MCF 10A (cell line): ENCODE measurements at regions of chr14 and their contacts with region 1.

Region 1: DNA sequence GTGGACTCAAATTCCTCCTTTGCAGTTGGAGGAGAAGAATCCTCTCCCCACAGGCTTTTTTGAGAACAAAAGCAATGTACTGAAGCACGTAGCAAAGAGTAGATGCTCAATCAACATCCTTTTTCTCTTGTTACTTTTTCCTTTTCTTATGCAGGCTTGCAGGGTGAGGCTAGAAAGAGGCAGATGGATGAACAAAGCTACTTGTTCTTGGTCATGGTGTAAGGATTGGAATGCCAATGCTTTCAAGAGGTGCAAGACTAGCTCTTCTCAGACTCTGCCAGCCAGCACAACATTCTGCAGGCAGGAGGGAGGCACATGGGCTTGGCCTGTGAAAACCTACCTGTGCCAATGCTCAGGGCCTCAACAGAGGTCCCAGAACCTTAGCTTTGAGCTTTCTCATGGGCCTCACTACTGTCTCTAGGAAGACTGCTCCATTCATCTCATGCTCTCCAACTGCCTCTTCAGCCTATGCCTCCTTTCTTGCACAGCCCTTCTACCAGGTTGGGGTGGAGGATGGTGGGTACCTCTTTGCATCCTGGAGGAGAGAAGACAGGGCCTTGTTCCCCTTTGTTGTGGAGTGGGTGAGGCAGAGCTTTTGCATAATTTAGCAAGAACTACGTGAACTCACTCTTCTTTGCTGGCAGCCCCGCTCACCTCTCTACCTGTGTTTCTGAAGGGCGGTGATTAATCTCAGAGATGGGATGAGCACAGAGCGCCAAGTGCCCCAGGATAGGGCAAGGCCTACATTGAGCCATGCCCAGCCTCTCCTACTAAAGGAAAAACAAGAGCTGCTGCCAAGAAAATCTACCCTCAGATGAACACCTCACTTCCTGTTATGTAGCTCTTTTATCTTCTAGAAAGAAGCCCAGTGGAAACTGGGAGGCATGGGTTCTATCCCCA is 1119.7 kb downstream of the VRK1 start:
- DNase-seq: peak; percentile 94
- H3K4me3 Mint-ChIP-seq: no peak overlapping the region
- H3K27ac Mint-ChIP-seq: peak overlapping the region; percentile 43
- H3K4me1 Mint-ChIP-seq: peaks cover 17% of the 10 kb centered on the region
- H3K27me3 Mint-ChIP-seq: no peaks in the 10 kb centered on the region
- CTCF ChIP-seq: no peak

Region 2: DNA sequence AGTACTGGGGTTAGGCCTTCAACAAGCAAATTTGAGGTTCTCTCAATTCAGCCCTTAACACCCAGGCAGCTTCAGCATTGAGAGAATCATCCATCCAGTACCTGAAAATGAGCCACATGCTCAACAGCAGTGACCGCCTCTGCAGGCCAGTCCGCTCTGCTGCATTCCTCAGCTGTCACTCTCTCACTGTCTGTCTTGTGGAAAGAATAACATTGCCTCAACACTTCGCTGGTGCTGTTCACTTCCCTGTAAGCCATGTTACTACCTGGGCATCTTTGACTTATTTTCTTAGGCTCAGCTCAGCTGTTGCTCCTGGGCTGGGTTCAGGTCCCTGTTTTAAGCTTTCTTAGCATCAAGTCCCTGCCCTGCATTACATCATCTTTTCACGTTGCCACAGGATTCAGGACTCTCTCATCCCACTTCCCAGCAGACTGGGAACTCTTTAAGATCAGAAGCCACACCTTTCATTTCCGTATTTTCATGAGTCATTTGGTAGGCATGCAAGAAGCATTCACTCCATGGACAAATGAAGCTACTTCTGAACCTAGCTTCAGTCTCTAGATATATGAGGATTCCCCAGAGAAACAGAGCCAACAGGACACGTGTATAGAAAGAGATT is 393.1 kb before region 1 on chr14:
- CTCF ChIA-PET with region 1: no interaction called
- POLR2A ChIA-PET with region 1: no interaction called
- intact Hi-C with region 1: no loop called
- DNase-seq: peak; percentile 84
- H3K4me3 Mint-ChIP-seq: no peak overlapping the region
- H3K27ac Mint-ChIP-seq: no peak overlapping the region
- H3K4me1 Mint-ChIP-seq: peaks cover 9% of the 10 kb centered on the region
- H3K27me3 Mint-ChIP-seq: peaks cover 16% of the 10 kb centered on the region
- CTCF ChIP-seq: no peak

Region 3: DNA sequence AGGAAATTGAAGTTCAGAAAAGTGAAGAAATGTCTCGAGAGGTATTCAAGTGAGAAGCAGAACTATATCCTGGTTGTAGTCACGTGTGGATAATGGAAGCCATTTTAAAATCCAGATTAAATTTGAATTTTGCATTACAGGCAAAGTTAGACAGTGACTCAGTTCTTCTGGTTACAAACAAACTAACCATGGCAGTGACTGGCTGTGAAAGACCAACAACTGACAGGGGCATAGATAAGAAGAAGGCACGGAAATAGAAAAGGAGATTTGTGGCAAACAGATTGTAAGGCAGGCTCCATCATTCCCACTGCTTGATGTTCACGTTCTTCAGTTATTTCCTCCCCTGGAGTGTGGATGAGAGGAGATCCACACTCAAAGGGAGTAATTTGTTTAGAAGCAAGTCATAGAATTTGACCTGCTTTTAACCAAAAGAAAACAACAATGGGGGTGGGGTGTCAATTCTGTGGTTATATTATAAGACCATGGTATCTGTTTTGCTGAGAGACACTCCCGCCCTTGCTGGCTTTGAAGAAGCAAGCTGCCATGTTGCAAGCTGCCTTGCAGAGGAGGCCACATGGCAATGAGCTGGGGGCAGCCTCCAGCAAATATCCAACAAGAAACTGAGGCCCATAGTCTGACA is 324.5 kb before region 1 on chr14:
- CTCF ChIA-PET with region 1: no interaction called
- POLR2A ChIA-PET with region 1: no interaction called
- intact Hi-C with region 1: no loop called
- DNase-seq: no peak
- H3K4me3 Mint-ChIP-seq: no peak overlapping the region
- H3K27ac Mint-ChIP-seq: no peak overlapping the region
- H3K4me1 Mint-ChIP-seq: no peaks in the 10 kb centered on the region
- H3K27me3 Mint-ChIP-seq: peaks cover 52% of the 10 kb centered on the region
- CTCF ChIP-seq: no peak

Region 4: GRCh38 chr14:97802430-97803373 is 114.2 kb before region 1 on chr14:
- CTCF ChIA-PET with region 1: no interaction called
- POLR2A ChIA-PET with region 1: no interaction called
- intact Hi-C with region 1: no loop called
- DNase-seq: no peak
- H3K4me3 Mint-ChIP-seq: no peak overlapping the region
- H3K27ac Mint-ChIP-seq: no peak overlapping the region
- H3K4me1 Mint-ChIP-seq: no peaks in the 10 kb centered on the region
- H3K27me3 Mint-ChIP-seq: no peaks in the 10 kb centered on the region
- CTCF ChIP-seq: no peak

Region 5: GRCh38 chr14:97878727-97879126 is 38.2 kb before region 1 on chr14:
- CTCF ChIA-PET with region 1: no interaction called
- POLR2A ChIA-PET with region 1: interaction called, 17 read pairs
- intact Hi-C with region 1: no loop called
- DNase-seq: peak; percentile 91
- H3K4me3 Mint-ChIP-seq: no peak overlapping the region
- H3K27ac Mint-ChIP-seq: no peak overlapping the region
- H3K4me1 Mint-ChIP-seq: peaks cover 15% of the 10 kb centered on the region
- H3K27me3 Mint-ChIP-seq: no peaks in the 10 kb centered on the region
- CTCF ChIP-seq: no peak

Region 6: DNA sequence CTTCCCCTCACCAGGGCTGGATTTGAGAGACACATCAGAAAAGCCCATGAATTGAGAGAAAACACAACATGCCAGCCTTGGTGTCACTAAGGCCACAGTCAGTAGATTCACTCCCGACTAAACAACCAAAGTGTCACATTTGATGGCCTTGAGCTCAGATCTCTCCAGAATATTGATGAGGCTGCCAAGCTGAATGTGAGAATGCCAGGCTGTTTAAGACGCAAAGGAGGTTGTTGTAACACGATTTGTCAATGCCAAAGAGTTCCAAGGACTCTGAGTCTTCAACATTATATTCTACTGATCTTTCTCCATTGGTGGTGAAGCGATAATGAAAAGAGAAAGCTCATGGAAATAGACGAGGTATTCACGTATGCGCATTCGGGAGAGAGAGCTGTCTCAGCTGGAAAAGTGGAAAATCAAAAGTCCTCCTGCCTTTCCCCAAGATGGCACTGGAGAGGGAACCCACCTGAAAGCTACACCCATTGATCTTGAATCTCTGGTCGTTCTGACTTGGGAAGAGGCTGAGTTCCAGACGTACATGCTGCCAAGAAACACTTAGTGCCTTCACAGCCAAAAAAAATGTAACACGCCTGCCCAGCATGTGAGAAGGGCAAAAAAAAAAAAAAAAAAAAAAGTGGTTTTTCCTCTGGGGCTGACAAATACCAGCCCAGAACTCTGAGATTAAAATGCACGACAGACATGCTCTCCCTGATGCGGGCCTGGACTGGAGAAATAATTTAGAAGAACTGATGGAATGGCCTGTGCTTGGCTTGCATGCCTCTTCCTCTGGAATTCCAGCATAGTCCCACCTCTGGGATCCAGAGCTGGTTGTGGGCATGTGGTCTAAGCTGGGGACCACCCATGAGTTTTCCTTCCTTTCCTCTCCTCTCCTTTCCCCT is 39.9 kb after region 1 on chr14:
- CTCF ChIA-PET with region 1: no interaction called
- POLR2A ChIA-PET with region 1: no interaction called
- intact Hi-C with region 1: no loop called
- DNase-seq: no peak
- H3K4me3 Mint-ChIP-seq: no peak overlapping the region
- H3K27ac Mint-ChIP-seq: no peak overlapping the region
- H3K4me1 Mint-ChIP-seq: peaks cover 6% of the 10 kb centered on the region
- H3K27me3 Mint-ChIP-seq: no peaks in the 10 kb centered on the region
- CTCF ChIP-seq: no peak